ENCODE measurements at regions of chr11 and their contacts with region 1.

Region 1: DNA sequence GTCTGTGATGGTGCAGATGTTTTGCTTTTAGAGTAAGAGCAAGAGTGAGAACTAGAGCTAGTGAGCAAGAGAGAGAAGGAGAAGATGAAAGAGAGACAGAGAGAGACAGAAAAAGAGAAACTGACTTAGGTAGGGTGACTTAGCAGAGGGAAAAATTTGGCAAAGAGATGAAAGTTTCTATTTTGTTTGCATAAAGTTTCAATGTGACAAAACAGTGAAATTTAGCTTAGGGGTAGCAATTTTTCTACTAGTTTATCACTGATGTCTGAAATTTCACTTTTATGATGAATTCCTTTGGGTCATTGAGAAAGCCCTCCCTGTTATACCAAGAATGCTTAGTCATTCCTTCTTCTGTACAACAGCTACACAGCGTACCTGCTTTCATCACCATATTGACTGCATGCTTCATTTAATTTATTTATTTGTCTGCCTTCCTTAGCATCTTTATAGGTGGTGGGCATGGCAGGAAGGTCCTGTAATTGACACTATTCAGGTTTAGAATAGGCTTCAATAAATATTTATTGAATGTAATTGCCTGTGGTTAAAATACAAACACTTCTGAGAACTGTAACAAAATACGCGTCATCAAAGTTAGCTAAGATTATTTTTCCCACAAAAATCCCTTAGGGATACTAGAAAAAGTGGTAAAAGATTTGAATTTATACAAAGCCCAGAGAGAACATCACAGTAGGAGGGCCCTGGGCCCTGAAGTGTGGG is 19.9 kb upstream of the CTSC start:
- DNase-seq: no peak
- H3K4me3 ChIP-seq: no peak overlapping the region
- H3K27ac ChIP-seq: no peak overlapping the region
- H3K27me3 ChIP-seq: no peaks in the 10 kb centered on the region
- CTCF ChIP-seq: no peak

Region 2: GRCh38 chr11:88337181-88337986 is 20.1 kb before region 1 on chr11 and contains the start of gene CTSC:
- CTCF ChIA-PET with region 1: interaction called, 3 read pairs
- POLR2A ChIA-PET with region 1: interaction called, 10 read pairs
- DNase-seq: peak; percentile 73
- H3K4me3 ChIP-seq: peak within 1 kb of the TSS; percentile 98
- H3K27ac ChIP-seq: peak within 1 kb of the TSS; percentile 84
- H3K27me3 ChIP-seq: no peaks in the 10 kb centered on the region
- CTCF ChIP-seq: no peak
- polyA plus RNA-seq, gene CTSC: 474 and 565 TPM in 2 replicates

Measured in AG04450 (cell line).